ENCODE measurements at regions of chr15 and their contacts with region 1.

Region 1: GRCh38 chr15:34587717-34588674 is 4.5 kb upstream of the GOLGA8B start:
- DNase-seq: peak; percentile 63 to 81 (median 69)
- H3K4me3 ChIP-seq: peak overlapping the region; percentile 13
- H3K27ac ChIP-seq: no peak overlapping the region
- H3K4me1 ChIP-seq: peaks cover 4% of the 10 kb centered on the region
- H3K27me3 ChIP-seq: no peaks in the 10 kb centered on the region
- CTCF ChIP-seq: peak; percentile 32 to 80 (median 61)
- EP300 ChIP-seq: no peak
- POLR2A ChIP-seq: peak; percentile 51

Region 2: DNA sequence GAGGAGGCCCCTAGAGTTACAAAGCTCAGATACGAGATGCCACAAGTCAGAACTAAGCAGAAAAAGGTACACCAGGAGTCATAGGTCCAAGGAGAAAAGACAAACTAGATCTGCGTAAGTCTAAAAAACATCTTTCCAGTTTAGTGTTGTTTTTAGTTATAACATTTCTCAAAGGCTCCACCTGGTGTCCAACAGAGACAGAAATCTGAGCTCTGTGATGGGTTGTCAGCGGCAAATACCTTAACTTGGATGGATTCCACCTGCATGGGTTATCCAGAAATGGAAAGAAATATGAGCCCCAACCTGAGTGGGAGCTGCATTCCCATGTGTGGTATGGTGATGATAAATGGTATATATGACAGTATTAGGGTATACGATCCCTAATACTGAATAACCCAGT is 858.3 kb before region 1 on chr15:
- intact Hi-C with region 1: no loop called
- DNase-seq: no peak
- H3K4me3 ChIP-seq: no peak overlapping the region
- H3K27ac ChIP-seq: no peak overlapping the region
- H3K4me1 ChIP-seq: no peaks in the 10 kb centered on the region
- H3K27me3 ChIP-seq: no peaks in the 10 kb centered on the region
- CTCF ChIP-seq: no peak
- EP300 ChIP-seq: no peak
- POLR2A ChIP-seq: no peak

Region 3: GRCh38 chr15:34304613-34305012 is 283.4 kb before region 1 on chr15:
- intact Hi-C with region 1: no loop called
- DNase-seq: no peak
- H3K4me3 ChIP-seq: no peak overlapping the region
- H3K27ac ChIP-seq: no peak overlapping the region
- H3K4me1 ChIP-seq: no peaks in the 10 kb centered on the region
- H3K27me3 ChIP-seq: no peaks in the 10 kb centered on the region
- CTCF ChIP-seq: no peak
- EP300 ChIP-seq: no peak
- POLR2A ChIP-seq: no peak

Region 4: DNA sequence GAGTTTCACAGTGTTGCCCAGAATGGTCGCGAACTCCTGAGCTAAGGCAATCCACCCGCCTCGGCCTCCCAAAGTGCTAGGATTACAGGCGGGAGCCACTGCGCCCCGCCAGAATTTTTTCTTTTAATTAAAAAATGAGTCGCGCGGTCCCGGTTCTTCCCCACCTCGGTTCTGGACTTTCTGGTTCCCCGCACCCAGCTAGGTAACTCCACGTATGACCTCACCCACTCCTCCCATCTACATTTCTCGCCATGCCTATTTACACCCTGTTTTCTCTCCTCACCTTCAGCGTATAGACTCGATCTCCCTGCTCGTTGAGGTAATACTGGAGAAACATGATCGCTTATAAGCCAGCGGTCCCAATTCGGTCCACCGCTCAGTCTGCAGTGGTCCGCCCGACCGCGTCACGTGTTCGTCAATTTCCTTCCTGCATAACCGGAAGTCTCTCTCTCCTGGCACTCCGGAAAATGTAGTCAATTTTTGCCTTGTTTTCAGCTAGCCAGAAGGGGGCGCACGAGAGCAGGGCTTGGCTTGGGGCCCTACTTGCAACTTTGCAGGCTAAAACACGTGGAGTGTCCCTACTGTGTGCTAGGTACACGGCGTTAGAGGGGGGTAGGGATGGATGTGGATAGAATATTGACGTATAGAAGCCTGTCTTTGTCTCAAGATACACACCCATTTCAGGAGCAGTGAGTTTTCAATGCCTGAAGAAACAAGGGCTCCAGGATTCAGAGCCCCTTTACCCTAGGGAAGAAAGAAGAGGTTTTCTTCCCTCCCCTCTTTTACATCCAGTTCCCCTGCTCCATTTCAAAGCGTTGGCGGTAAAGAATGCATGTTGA is 245.0 kb before region 1 on chr15 and contains the starts of genes NOP10 and NUTM1:
- intact Hi-C with region 1: loop called in 1 of 4 experiments (anchors 10 kb)
- DNase-seq: peak; percentile 84 to 92 (median 91)
- H3K4me3 ChIP-seq: peak within 1 kb of the TSS; percentile 89
- H3K27ac ChIP-seq: peak within 1 kb of the TSS in 1 of 2 donors; percentile 63
- H3K4me1 ChIP-seq: peaks cover 10% of the 10 kb centered on the region
- H3K27me3 ChIP-seq: no peaks in the 10 kb centered on the region
- CTCF ChIP-seq: peak; percentile 92 to 99 (median 93)
- EP300 ChIP-seq: no peak
- POLR2A ChIP-seq: peak; percentile 64
- total RNA-seq, gene NOP10: 46.5 to 117 (median 53.0) TPM
- total RNA-seq, gene NUTM1: not detected

Region 5: DNA sequence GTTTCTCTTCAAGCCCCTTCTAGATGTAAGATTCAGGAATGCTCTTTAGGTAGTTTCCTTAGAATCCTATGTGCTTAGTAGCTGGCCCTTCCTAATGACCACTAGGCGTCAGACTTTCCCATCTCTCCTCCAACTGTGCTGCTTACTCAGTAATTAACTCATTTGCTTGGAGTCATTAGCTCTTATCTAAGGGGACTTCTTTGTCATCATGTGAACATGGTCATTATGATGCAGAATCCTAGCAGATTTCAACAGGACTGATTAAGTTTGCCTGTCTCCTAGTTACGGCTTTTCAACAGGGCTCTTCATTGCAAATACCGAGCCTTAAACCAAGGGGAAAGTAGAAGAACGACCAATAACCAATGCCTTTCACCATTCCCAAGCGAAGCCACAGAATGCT is 120.4 kb after region 1 on chr15:
- intact Hi-C with region 1: no loop called
- DNase-seq: no peak
- H3K4me3 ChIP-seq: no peak overlapping the region
- H3K27ac ChIP-seq: no peak overlapping the region
- H3K4me1 ChIP-seq: no peaks in the 10 kb centered on the region
- H3K27me3 ChIP-seq: no peaks in the 10 kb centered on the region
- CTCF ChIP-seq: no peak
- EP300 ChIP-seq: no peak
- POLR2A ChIP-seq: no peak